ENCODE measurements at regions of chr17 and their contacts with region 1.

Region 1: DNA sequence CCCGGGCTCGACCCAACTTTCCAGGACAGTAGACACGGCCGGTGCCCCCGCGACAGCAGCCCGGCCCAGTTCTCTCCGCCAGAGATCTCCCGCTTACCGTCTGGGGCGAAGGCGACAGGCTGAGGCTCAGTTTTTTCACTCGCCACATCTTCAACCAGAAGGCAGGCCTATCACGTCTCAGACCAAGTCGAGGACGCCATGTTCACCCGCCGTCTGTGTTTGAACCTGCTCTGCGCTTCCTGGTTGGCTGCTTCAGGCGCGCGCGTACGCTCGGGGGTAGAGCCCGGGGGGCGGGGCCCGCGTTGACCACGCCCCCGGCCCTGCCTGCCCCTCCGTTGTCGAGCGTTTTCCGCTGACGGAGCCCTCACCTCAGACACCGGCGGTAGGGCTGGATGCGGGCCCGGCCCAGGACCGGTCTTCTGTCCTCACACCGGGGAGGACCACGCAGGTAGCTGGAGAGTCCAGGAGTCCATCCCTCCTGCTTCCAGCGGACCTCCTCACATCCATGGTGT is at the start of gene SPAG5:
- ATAC-seq: peak; percentile 78 to 96 (median 94)
- H3K4me3 ChIP-seq: peak within 1 kb of the TSS; percentile 42 to 69 (median 54)
- H3K27ac ChIP-seq: peak within 1 kb of the TSS; percentile 14 to 56
- H3K4me1 ChIP-seq: peaks cover 0 to 4% of the 10 kb centered on the region in 2 donors
- total RNA-seq, gene SPAG5: 2.3 to 65.8 (median 9.8) TPM

Region 2: DNA sequence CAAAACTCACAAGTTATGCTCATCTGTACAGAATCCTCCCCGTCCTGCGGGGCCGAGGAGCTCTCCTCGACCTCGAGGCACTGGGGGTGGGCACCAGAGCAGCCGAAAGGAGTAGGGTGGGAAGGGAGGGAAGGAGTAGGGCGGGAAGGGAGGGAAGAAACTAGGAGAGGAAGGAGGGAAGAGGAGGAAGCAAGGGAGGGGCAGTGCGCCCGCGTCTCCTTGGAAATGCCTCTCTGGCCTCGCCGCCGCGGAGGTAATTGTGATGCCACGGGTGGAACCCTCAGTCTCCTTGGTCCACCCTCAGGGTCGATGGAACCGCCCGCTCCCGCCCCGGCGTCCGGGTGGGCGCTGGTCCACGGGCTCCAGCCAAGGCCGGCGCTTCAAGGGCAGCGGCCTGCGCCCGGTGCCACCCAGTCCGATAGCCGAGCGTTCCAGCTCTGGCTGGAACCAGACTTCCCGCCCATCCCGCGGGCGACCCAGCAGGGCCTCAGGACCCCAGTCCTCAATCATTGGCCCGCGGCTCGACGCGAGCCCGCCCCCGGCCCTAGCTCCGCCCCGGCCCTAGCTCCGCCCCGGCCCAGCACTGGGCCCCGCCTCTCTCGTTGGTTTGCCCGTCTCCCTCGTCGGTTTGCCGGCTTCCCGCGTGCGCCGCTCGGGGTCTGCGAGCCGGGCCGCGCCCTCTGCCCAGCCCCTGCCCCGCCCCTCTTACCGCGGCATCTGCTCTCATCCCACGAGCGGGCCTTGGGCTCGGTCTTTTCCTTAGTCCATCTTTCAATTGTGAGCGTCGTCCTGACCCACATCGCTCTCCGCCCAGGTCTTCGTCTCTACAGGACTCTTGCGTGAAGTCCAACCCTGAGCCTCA is 112.2 kb after region 1 on chr17:
- in situ Hi-C with region 1: loop called in 1 of 9 experiments (anchors 25 kb)
- ATAC-seq: peak; percentile 87 to 93 (median 92)
- H3K4me3 ChIP-seq: peak overlapping the region; percentile 52 to 69 (median 61)
- H3K27ac ChIP-seq: peak overlapping the region; percentile 88 to 93
- H3K4me1 ChIP-seq: peaks cover 15 to 17% of the 10 kb centered on the region in 2 donors

Measured in motor neuron (in vitro differentiated cells).